ENCODE measurements at regions of chr12 and their contacts with region 1.

Region 1: DNA sequence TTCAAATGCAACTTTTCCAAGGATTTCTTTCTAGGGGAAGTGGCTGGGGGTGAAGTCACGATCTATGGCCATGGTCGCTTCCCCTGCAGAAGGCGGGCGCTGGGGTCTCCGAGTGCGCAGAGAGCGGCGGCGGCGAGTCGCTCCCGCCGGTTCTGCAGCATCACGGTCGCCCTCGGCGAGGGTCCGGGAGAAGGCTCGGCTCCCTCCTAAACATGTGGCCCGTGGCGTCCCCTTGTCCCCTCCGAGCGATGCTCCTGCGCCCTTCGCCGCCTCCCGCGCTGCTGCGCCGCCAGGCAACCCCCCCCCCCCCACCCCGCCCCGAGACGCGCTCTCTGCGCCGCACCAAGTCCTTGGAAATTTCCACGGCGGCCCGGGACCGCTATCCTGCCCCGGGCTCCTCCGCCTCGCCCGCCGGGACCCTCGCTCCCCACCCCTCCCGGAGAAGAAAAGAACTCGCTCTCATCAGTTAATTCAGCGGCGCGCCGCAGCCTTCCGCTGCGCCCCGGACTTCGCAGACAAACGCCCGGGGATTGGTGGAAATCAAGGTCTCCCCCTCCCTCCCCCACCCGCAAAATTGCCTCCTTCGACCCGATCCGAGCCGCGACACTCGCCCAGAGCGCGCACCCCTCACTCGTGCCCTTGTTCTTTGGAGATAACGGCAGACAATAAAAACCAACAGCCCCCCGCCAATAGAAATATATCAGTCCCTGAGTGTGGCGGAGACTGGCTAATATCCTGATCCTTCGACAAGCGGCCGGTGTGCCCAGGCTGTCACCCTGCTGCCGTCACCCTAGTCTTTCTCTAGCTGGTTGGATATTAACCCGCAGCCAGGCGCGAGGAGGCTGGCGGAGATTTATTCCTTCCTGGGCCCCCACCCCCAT is at the start of gene ST8SIA1:
- DNase-seq: peak; percentile 52 to 59
- H3K4me3 ChIP-seq: peak within 1 kb of the TSS; percentile 62 to 77
- H3K27ac ChIP-seq: peak within 1 kb of the TSS; percentile 76 to 89
- H3K4me1 ChIP-seq: no peaks in the 10 kb centered on the region
- H3K27me3 ChIP-seq: no peaks in the 10 kb centered on the region
- CTCF ChIP-seq: no peak
- POLR2A ChIP-seq: no peak
- total RNA-seq, gene ST8SIA1: 7.8 to 14.6 (median 9.9) TPM

Region 2: GRCh38 chr12:22100958-22101748 is 233.5 kb before region 1 on chr12:
- intact Hi-C with region 1: loop called (anchors 10 kb)
- DNase-seq: peak; percentile 28 to 38
- H3K4me3 ChIP-seq: no peak overlapping the region
- H3K27ac ChIP-seq: no peak overlapping the region
- H3K4me1 ChIP-seq: no peaks in the 10 kb centered on the region
- H3K27me3 ChIP-seq: no peaks in the 10 kb centered on the region
- CTCF ChIP-seq: peak; percentile 31 to 53 (median 44)
- POLR2A ChIP-seq: no peak

Region 3: DNA sequence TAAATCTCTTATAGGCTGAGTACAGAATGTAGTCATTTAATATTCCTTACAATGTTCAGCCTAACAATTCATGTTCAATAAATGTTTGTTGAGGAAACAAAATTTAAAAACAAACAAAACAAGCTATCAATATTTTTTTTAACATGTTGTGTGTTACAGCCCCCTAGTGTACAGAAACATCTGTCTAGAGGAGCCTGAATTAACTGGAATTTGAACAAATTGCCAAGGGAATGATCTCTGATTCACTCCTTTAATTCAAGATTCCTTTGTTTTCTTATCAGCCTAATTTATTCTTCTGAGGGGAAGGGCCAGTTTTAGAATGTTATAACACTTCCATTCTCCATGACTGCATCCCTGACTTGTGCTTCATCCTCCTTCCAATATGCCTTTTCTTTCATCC is 161.5 kb before region 1 on chr12:
- intact Hi-C with region 1: no loop called
- DNase-seq: no peak
- H3K4me3 ChIP-seq: no peak overlapping the region
- H3K27ac ChIP-seq: no peak overlapping the region
- H3K4me1 ChIP-seq: no peaks in the 10 kb centered on the region
- H3K27me3 ChIP-seq: no peaks in the 10 kb centered on the region
- CTCF ChIP-seq: no peak
- POLR2A ChIP-seq: no peak

Region 4: DNA sequence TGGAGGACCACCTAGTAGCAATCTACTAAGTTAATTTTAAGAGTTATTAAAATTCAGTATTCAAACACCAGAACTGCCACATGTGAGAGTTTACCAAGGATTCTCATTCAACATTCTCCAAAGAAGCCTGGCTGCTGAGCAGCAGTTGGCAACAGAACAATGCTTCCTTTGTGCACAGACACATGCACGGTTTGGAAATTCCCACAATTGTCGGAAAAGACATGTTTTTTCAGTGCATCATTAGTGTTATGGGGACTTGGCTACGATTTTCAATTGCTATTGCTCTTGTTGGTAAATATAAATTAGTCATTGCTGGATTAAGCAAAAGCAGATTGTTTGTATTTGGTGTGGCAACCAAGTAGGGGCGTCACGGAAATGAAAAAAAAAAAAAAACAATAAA is 22.3 kb before region 1 on chr12:
- intact Hi-C with region 1: no loop called
- DNase-seq: no peak
- H3K4me3 ChIP-seq: no peak overlapping the region
- H3K27ac ChIP-seq: peak overlapping the region in 1 of 2 donors; percentile 1
- H3K4me1 ChIP-seq: no peaks in the 10 kb centered on the region
- H3K27me3 ChIP-seq: no peaks in the 10 kb centered on the region
- CTCF ChIP-seq: no peak
- POLR2A ChIP-seq: no peak

Region 5: GRCh38 chr12:22631863-22632463 is 297.3 kb after region 1 on chr12:
- intact Hi-C with region 1: no loop called
- DNase-seq: no peak
- H3K4me3 ChIP-seq: no peak overlapping the region
- H3K27ac ChIP-seq: no peak overlapping the region
- H3K4me1 ChIP-seq: no peaks in the 10 kb centered on the region
- H3K27me3 ChIP-seq: no peaks in the 10 kb centered on the region
- CTCF ChIP-seq: peak; percentile 21 to 65 (median 48)
- POLR2A ChIP-seq: no peak

Measured in uterus (tissue), 4 donors.